ENCODE measurements at regions of chr6 and their contacts with region 1.

Region 1: DNA sequence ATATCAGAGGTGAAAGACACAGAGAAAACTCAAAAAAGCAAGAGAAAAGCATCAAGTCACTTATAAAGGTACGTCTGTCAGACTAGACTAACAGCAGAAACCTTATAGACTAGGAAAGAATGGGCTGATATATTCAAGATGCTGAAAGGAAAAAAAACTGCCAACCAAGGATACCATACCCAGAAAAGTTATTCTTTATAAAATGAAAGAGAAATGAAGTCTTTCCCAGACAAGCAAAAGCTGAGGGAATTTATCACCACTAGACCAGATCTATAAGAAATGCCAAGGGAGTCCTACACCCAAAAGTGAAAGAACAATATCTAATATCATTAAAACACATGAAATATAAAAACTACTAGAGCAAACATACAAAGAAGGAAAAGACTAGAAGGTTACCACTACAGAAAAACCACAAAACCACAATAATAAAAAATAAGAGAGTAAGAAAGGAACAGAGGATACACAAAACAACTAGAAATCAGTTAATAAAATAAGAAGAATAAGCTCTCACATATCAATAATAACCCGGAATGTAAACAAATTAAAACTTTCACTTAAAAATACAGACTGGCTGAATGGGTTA is 6.2 kb downstream of the MOXD1 start:
- DNase-seq: no peak
- H3K4me3 Mint-ChIP-seq: no peak overlapping the region
- H3K27ac Mint-ChIP-seq: no peak overlapping the region
- H3K4me1 Mint-ChIP-seq: no peaks in the 10 kb centered on the region
- H3K27me3 Mint-ChIP-seq: peaks cover 46% of the 10 kb centered on the region

Region 2: DNA sequence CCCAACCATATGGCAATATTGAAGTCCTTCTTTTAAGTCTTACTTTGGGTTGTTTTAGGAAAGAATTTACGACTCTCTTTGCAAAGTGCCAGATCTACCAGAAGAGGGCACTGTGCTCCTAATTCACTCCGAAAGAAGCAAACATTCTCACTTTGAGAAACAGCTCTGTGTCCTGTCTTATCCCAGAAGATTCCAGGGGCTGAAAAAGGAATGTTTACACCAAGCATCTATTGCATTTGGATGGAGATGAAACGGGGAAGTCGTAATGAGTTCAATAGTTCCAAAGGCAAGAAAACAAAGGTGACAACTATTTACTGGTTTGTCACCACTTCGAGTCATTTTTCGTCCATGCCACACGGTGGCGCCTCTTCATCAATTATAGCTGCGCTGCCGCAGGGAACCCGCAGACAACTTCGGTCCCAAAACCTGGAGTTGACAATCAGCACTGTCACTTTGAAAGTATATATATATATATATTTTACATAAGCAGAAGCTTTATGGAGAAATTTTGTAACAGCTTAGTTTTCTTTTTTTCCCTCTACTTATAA is 115.4 kb before region 1 on chr6:
- intact Hi-C with region 1: loop called (anchors 2 kb)
- DNase-seq: peak; percentile 90
- H3K4me3 Mint-ChIP-seq: peak overlapping the region; percentile 83
- H3K27ac Mint-ChIP-seq: peak overlapping the region; percentile 74
- H3K4me1 Mint-ChIP-seq: peaks cover 2% of the 10 kb centered on the region
- H3K27me3 Mint-ChIP-seq: peaks cover 15% of the 10 kb centered on the region

Region 3: DNA sequence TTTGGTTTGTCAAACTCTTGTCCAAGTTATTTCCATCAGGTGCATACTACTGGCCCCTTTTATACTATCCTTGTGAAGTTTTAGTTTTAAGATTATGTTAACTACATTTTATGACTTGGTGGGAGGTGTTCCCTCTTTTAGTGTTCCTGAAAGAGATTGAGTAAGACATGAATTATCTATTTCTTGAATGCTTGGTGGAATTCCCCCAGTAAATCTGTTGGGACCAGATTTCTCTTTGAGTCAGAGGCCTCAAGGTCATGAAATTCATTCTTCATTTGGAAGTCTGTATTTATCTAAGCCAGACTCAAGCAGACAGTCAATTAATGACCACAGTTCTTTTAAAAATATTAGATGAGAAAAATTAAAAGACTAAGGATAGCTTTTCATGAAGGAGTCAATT is 75.1 kb before region 1 on chr6:
- intact Hi-C with region 1: no loop called
- DNase-seq: no peak
- H3K4me3 Mint-ChIP-seq: no peak overlapping the region
- H3K27ac Mint-ChIP-seq: no peak overlapping the region
- H3K4me1 Mint-ChIP-seq: peaks cover 4% of the 10 kb centered on the region
- H3K27me3 Mint-ChIP-seq: peaks cover 7% of the 10 kb centered on the region

Region 4: GRCh38 chr6:132961122-132961521 is 566.0 kb after region 1 on chr6:
- intact Hi-C with region 1: no loop called
- DNase-seq: no peak
- H3K4me3 Mint-ChIP-seq: no peak overlapping the region
- H3K27ac Mint-ChIP-seq: no peak overlapping the region
- H3K4me1 Mint-ChIP-seq: peaks cover 20% of the 10 kb centered on the region
- H3K27me3 Mint-ChIP-seq: peaks cover 37% of the 10 kb centered on the region